CD4-positive, alpha-beta memory T cell (primary cell): ENCODE measurements at regions of chr12 and their contacts with region 1.

Region 1: GRCh38 chr12:27733052-27733656 is 22.5 kb downstream of the MRPS35 start:
- DNase-seq: peak in 4 of 5 donors; percentile 24 to 42 (median 34)
- H3K4me3 ChIP-seq: no peak overlapping the region
- H3K4me3 Mint-ChIP-seq: no peak overlapping the region
- H3K27ac ChIP-seq: no peak overlapping the region
- H3K27ac Mint-ChIP-seq: no peak overlapping the region
- H3K4me1 ChIP-seq: no peaks in the 10 kb centered on the region
- H3K4me1 Mint-ChIP-seq: peaks cover 0 to 7% (median 0%) of the 10 kb centered on the region in 4 donors
- H3K27me3 ChIP-seq: no peaks in the 10 kb centered on the region
- H3K27me3 Mint-ChIP-seq: no peaks in the 10 kb centered on the region

Region 2: GRCh38 chr12:27840244-27840999 is 107.3 kb after region 1 on chr12:
- CTCF ChIA-PET with region 1: no interaction called
- POLR2A ChIA-PET with region 1: no interaction called
- intact Hi-C with region 1: loop called (anchors 5 kb)
- DNase-seq: no peak
- H3K4me3 ChIP-seq: no peak overlapping the region
- H3K4me3 Mint-ChIP-seq: no peak overlapping the region
- H3K27ac ChIP-seq: no peak overlapping the region
- H3K27ac Mint-ChIP-seq: no peak overlapping the region
- H3K4me1 ChIP-seq: no peaks in the 10 kb centered on the region
- H3K4me1 Mint-ChIP-seq: peaks cover 0 to 2% (median 0%) of the 10 kb centered on the region in 4 donors
- H3K27me3 ChIP-seq: no peaks in the 10 kb centered on the region
- H3K27me3 Mint-ChIP-seq: no peaks in the 10 kb centered on the region

Region 3: GRCh38 chr12:27940756-27941402 is 207.7 kb after region 1 on chr12:
- CTCF ChIA-PET with region 1: interaction called, 33 read pairs
- POLR2A ChIA-PET with region 1: no interaction called
- intact Hi-C with region 1: no loop called
- DNase-seq: peak; percentile 54 to 64 (median 55)
- H3K4me3 ChIP-seq: no peak overlapping the region
- H3K4me3 Mint-ChIP-seq: no peak overlapping the region
- H3K27ac ChIP-seq: no peak overlapping the region
- H3K27ac Mint-ChIP-seq: no peak overlapping the region
- H3K4me1 ChIP-seq: no peaks in the 10 kb centered on the region
- H3K4me1 Mint-ChIP-seq: peaks cover 0 to 2% (median 0%) of the 10 kb centered on the region in 4 donors
- H3K27me3 ChIP-seq: no peaks in the 10 kb centered on the region
- H3K27me3 Mint-ChIP-seq: peaks cover 3 to 4% of the 10 kb centered on the region in 2 donors

Region 4: GRCh38 chr12:28872654-28873268 is 1139.6 kb after region 1 on chr12:
- CTCF ChIA-PET with region 1: no interaction called
- POLR2A ChIA-PET with region 1: no interaction called
- intact Hi-C with region 1: loop called (anchors 5 kb)
- DNase-seq: no peak
- H3K4me3 ChIP-seq: no peak overlapping the region
- H3K4me3 Mint-ChIP-seq: no peak overlapping the region
- H3K27ac ChIP-seq: no peak overlapping the region
- H3K27ac Mint-ChIP-seq: no peak overlapping the region
- H3K4me1 ChIP-seq: no peaks in the 10 kb centered on the region
- H3K4me1 Mint-ChIP-seq: no peaks in the 10 kb centered on the region
- H3K27me3 ChIP-seq: no peaks in the 10 kb centered on the region
- H3K27me3 Mint-ChIP-seq: peaks cover 0 to under 1% of the 10 kb centered on the region in 2 donors